CD4-positive, alpha-beta T cell (primary cell): ENCODE measurements at regions of chr1 and their contacts with region 1.

Region 1: GRCh38 chr1:156193488-156194299 is at the start of gene SLC25A44:
- DNase-seq: peak; percentile 92 to 99 (median 97)
- ATAC-seq: peak; percentile 98
- H3K4me3 ChIP-seq: peak within 1 kb of the TSS; percentile 91
- H3K4me3 Mint-ChIP-seq: peak within 1 kb of the TSS; percentile 95
- H3K27ac ChIP-seq: peak within 1 kb of the TSS; percentile 74 to 78
- H3K27ac Mint-ChIP-seq: peak within 1 kb of the TSS; percentile 84
- H3K4me1 ChIP-seq: peaks cover 37% of the 10 kb centered on the region
- H3K4me1 Mint-ChIP-seq: peaks cover 39% of the 10 kb centered on the region
- H3K27me3 ChIP-seq: no peaks in the 10 kb centered on the region
- H3K27me3 Mint-ChIP-seq: no peaks in the 10 kb centered on the region
- CTCF ChIP-seq: peak; percentile 46
- total RNA-seq, gene SLC25A44: 11.6 to 13.0 TPM

Region 2: GRCh38 chr1:155208541-155209311 is 985.0 kb before region 1 on chr1 and contains the start of gene MTX1:
- CTCF ChIA-PET with region 1: no interaction called
- POLR2A ChIA-PET with region 1: no interaction called
- intact Hi-C with region 1: no loop called
- DNase-seq: peak; percentile 73 to 95 (median 86)
- ATAC-seq: peak; percentile 80
- H3K4me3 ChIP-seq: peak within 1 kb of the TSS; percentile 69
- H3K4me3 Mint-ChIP-seq: peak within 1 kb of the TSS; percentile 94
- H3K27ac ChIP-seq: peak within 1 kb of the TSS; percentile 99 to 100
- H3K27ac Mint-ChIP-seq: peak within 1 kb of the TSS; percentile 96
- H3K4me1 ChIP-seq: peaks cover 30% of the 10 kb centered on the region
- H3K4me1 Mint-ChIP-seq: peaks cover 31% of the 10 kb centered on the region
- H3K27me3 ChIP-seq: no peaks in the 10 kb centered on the region
- H3K27me3 Mint-ChIP-seq: no peaks in the 10 kb centered on the region
- CTCF ChIP-seq: no peak
- total RNA-seq, gene MTX1: 19.9 to 20.7 TPM

Region 3: GRCh38 chr1:155934097-155934935 is 259.4 kb before region 1 on chr1 and contains the start of gene KHDC4:
- CTCF ChIA-PET with region 1: no interaction called
- POLR2A ChIA-PET with region 1: no interaction called
- intact Hi-C with region 1: no loop called
- DNase-seq: peak; percentile 88 to 99 (median 93)
- ATAC-seq: peak; percentile 93
- H3K4me3 ChIP-seq: peak within 1 kb of the TSS; percentile 82
- H3K4me3 Mint-ChIP-seq: no peak within 1 kb of the TSS
- H3K27ac ChIP-seq: peak within 1 kb of the TSS; percentile 86 to 95
- H3K27ac Mint-ChIP-seq: no peak within 1 kb of the TSS
- H3K4me1 ChIP-seq: peaks cover 42% of the 10 kb centered on the region
- H3K4me1 Mint-ChIP-seq: peaks cover 38% of the 10 kb centered on the region
- H3K27me3 ChIP-seq: no peaks in the 10 kb centered on the region
- H3K27me3 Mint-ChIP-seq: no peaks in the 10 kb centered on the region
- CTCF ChIP-seq: no peak
- total RNA-seq, gene KHDC4: 56.6 to 60.8 TPM

Region 4: DNA sequence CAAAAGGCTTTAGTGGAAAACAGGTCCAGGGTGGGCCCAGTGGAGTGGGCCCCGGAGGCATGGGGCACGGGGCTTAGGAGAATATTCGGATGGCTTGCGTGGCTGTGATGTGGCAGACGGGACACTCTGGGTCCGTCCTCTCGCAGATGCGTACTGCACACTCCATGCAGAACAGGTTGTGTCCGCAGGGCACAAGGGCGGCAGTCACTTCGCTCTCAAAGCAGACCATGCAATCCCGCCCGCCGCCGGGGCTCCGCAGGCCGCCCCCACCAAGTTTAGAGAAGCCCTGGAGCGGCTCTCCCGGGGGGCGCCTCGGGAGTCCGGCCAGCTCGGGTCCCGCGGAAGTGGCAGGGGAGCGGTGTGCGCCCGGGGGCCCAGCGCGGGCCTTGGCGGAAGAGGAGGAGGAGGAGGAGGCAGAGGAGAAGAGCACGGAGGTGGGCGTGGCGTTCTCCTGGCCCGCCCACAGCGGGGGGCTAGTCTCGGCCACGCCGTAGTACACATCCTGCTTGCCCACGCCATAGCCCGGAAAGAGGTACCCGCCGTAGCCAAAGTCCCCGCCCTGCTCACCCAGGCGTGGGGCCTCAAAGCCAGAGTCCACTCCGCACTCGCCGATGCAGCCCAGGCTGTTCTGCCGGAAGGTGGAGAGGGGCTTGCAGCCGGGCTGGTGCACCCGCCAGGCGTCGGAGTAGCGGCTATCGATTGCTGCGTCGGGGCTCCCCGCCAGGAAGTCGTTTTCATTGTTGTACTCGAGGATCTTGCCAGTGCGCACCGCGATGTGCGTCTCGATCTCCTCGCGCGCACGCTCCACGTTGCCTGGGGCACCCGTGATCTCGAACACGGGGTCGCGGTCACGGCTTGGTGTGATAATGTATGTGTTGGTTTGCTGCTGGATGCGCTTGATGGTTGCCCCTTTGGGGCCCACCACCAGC is 116.9 kb before region 1 on chr1:
- CTCF ChIA-PET with region 1: no interaction called
- POLR2A ChIA-PET with region 1: no interaction called
- intact Hi-C with region 1: no loop called
- DNase-seq: peak in 1 of 14 experiments; percentile 16
- ATAC-seq: no peak
- H3K4me3 ChIP-seq: peak overlapping the region; percentile 5
- H3K4me3 Mint-ChIP-seq: no peak overlapping the region
- H3K27ac ChIP-seq: no peak overlapping the region
- H3K27ac Mint-ChIP-seq: no peak overlapping the region
- H3K4me1 ChIP-seq: peaks cover 5% of the 10 kb centered on the region
- H3K4me1 Mint-ChIP-seq: no peaks in the 10 kb centered on the region
- H3K27me3 ChIP-seq: peaks cover 0 to 1% of the 10 kb centered on the region in 2 experiments
- H3K27me3 Mint-ChIP-seq: peaks cover 4% of the 10 kb centered on the region
- CTCF ChIP-seq: no peak

Region 5: GRCh38 chr1:156146020-156146768 is 47.5 kb before region 1 on chr1:
- CTCF ChIA-PET with region 1: no interaction called
- POLR2A ChIA-PET with region 1: interaction called, 3 read pairs
- intact Hi-C with region 1: loop called (anchors 1 to 5 kb)
- DNase-seq: peak in 8 of 14 experiments; percentile 25 to 83 (median 47)
- ATAC-seq: peak; percentile 76
- H3K4me3 ChIP-seq: no peak overlapping the region
- H3K4me3 Mint-ChIP-seq: peak overlapping the region; percentile 60
- H3K27ac ChIP-seq: no peak overlapping the region
- H3K27ac Mint-ChIP-seq: peak overlapping the region; percentile 71
- H3K4me1 ChIP-seq: peaks cover 30% of the 10 kb centered on the region
- H3K4me1 Mint-ChIP-seq: peaks cover 24% of the 10 kb centered on the region
- H3K27me3 ChIP-seq: no peaks in the 10 kb centered on the region
- H3K27me3 Mint-ChIP-seq: peaks cover 5% of the 10 kb centered on the region
- CTCF ChIP-seq: peak; percentile 73

Region 6: DNA sequence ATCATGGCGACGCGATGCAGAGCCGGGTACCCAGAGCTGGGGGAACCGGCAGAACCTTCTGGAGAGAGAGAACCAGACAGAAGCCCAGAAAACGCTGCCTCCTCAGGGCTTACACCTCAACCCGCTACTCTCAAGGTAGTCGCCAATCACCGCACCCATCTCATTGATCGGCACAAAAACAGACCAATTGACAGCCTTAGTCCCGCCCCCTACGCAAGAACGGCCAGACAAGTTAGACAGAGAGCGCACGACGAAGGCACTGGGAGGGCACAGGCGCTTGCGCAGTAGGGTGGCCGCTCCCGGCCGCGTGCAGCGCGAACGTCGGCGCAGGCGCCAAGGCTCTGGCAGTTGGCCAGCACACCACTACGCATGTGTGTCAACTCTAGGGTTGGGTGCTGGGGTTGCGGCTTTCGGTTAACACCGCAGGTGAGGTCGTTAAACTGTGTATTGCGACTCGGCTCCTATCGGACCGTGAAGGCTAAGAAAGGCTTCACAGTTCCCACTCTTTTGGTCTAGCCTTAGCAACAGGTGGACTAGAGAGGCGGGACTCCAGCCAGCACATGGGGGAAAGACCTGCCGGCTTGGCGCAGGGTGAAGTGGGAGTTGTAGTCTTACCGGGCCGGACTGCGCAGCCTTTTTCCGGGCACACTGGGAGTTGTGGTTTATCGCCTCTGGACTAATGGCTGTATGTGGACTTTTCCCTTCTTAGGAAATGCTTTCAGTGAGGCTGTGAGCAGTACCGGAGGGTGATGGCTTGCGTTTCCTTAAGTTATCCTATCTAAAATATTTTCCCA is 144.7 kb after region 1 on chr1 and contains the starts of genes CCT3 and TSACC:
- CTCF ChIA-PET with region 1: no interaction called
- POLR2A ChIA-PET with region 1: no interaction called
- intact Hi-C with region 1: loop called in 1 of 2 experiments (anchors 5 kb)
- DNase-seq: peak; percentile 98 to 100 (median 99)
- ATAC-seq: peak; percentile 95
- H3K4me3 ChIP-seq: peak within 1 kb of the TSS; percentile 84
- H3K4me3 Mint-ChIP-seq: peak within 1 kb of the TSS; percentile 87
- H3K27ac ChIP-seq: peak within 1 kb of the TSS; percentile 79 to 96
- H3K27ac Mint-ChIP-seq: peak within 1 kb of the TSS; percentile 88
- H3K4me1 ChIP-seq: peaks cover 23% of the 10 kb centered on the region
- H3K4me1 Mint-ChIP-seq: peaks cover 41% of the 10 kb centered on the region
- H3K27me3 ChIP-seq: no peaks in the 10 kb centered on the region
- H3K27me3 Mint-ChIP-seq: no peaks in the 10 kb centered on the region
- CTCF ChIP-seq: no peak
- total RNA-seq, gene CCT3: 49.6 to 50.2 TPM
- total RNA-seq, gene TSACC: not detected